Activated CD4-positive, alpha-beta memory T cell treated with anti-CD3 and anti-CD28 coated beads for 36 hours (primary cell): ENCODE measurements at regions of chrX and their contacts with region 1.

Region 1: GRCh38 chrX:48891402-48892288 is 5.9 kb downstream of the TIMM17B start:
- DNase-seq: peak; percentile 88
- H3K4me3 Mint-ChIP-seq: peak overlapping the region; percentile 77
- H3K27ac Mint-ChIP-seq: peak overlapping the region; percentile 65
- H3K4me1 Mint-ChIP-seq: peaks cover 22% of the 10 kb centered on the region
- H3K27me3 Mint-ChIP-seq: no peaks in the 10 kb centered on the region

Region 2: GRCh38 chrX:48648336-48648751 is 243.3 kb before region 1 on chrX:
- CTCF ChIA-PET with region 1: no interaction called
- POLR2A ChIA-PET with region 1: no interaction called
- intact Hi-C with region 1: loop called (anchors 5 kb)
- DNase-seq: peak; percentile 43
- H3K4me3 Mint-ChIP-seq: no peak overlapping the region
- H3K27ac Mint-ChIP-seq: no peak overlapping the region
- H3K4me1 Mint-ChIP-seq: peaks cover 5% of the 10 kb centered on the region
- H3K27me3 Mint-ChIP-seq: no peaks in the 10 kb centered on the region

Region 3: DNA sequence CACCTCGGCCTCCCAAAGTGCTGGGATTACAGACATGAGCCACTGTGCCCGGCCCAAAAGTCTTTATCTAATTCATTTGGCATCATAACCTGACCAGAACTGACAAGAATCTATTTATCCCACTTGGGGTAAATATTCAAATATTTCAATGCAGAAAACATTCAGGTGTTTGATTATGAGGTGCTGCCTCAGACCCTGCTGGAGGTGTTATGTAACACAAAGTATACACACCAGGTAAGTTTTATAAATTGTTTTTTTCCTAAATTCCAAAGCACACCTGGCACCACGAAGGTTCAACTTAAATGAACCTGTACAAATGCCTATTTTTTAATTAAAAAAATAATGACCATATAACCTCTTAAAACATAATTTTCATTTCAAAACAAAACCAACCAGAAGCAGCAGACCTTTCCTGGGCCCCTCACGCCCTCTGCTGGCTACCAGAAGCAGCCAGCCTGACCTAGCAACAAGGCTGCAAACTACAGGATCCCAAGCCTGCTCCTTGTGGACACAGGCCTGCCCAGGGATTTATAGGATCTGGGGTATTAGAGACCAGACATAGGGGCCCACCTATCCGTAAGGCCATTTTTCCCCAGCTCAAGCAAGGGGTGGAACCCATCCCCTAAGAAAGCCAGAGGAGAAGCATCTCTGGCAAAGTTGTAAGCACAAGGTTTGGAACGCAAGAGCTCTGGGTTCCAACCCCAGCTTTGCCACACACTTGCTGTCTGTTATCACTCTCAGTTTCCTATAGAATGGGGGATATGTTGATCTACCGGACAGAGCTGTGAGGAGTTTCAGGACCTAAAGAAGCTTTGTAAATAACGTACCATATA is 54.1 kb after region 1 on chrX:
- CTCF ChIA-PET with region 1: interaction called, 9 read pairs
- POLR2A ChIA-PET with region 1: interaction called, 3 read pairs
- intact Hi-C with region 1: loop called (anchors 2 kb)
- DNase-seq: peak; percentile 65
- H3K4me3 Mint-ChIP-seq: no peak overlapping the region
- H3K27ac Mint-ChIP-seq: peak overlapping the region; percentile 67
- H3K4me1 Mint-ChIP-seq: peaks cover 49% of the 10 kb centered on the region
- H3K27me3 Mint-ChIP-seq: no peaks in the 10 kb centered on the region

Region 4: DNA sequence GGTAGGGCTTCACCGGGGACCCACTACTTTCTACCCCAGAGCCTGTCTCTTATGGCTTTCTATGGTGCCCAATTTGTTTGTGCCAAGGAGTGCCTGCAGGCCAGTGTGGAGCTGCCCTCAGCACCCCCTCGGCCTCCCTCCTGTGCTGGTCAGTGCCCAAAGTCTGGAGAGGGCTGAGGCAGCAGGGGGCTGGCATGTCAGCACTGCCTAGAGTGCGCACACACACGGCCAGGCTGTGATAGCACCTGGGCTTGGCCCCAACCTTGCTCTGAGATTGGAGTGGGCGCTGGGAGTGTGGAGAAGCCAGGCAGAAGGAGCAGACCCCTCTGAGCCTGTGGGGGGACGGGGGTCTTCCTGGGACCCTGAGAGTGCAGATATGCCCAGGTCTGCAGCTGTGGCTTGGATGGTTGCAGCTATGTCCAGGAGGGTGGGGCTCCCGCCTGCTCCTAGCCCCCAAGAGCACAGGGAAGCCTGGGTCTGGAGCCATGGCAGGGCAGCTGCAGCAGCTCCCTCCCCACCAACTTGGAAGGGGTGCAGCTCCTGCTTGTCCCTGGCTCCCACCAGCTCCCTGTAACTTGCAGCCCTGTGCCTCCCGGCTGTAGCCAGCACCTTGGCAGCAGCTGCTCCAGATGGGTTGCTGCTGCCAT is 753.5 kb after region 1 on chrX:
- CTCF ChIA-PET with region 1: no interaction called
- POLR2A ChIA-PET with region 1: no interaction called
- intact Hi-C with region 1: no loop called
- DNase-seq: no peak
- H3K4me3 Mint-ChIP-seq: no peak overlapping the region
- H3K27ac Mint-ChIP-seq: no peak overlapping the region
- H3K4me1 Mint-ChIP-seq: no peaks in the 10 kb centered on the region
- H3K27me3 Mint-ChIP-seq: no peaks in the 10 kb centered on the region